Heart left ventricle (tissue), 16 donors: ENCODE measurements at regions of chr16 and their contacts with region 1.

Region 1: DNA sequence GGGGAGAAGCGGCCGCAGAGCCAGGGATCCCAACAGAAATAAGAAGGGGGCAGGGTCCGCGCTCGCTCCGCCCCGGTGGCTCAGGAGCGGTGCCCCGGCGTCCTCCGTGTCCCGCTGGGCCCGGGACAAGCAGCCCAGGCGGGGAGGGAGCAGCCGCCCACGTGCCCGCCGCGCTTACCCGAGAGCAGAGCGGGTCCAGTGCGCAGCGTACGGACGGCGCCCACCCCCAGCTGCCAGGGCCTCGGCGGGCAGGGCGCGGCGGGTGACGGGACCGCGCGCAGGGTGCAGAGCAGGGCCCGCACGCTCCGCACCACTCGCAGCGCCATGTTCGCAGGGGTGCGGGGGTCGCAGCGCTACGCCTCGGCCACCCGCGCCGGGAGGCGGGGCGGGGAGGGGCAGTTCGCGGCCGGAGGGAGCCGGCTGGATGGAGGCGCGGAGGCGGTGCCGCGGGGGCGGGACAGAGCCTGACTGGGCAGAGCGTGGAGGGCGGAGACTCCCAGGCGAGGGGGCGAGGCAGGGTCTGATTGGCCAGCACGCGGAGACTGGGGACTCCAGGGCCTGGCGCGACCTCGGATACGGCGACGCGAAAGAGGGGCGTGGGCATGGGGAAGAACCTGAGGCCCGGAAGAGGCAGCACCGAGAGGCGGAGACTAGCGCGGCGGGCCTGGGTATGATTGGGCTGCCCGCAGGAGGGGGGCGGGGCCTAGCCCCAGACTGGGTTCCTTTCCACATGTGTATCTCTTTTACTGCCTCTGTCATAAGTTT is at the start of gene GCSH:
- DNase-seq: peak; percentile 100
- ATAC-seq: peak; percentile 99 to 100 (median 100)
- H3K4me3 ChIP-seq: peak within 1 kb of the TSS; percentile 50 to 97 (median 78)
- H3K27ac ChIP-seq: peak within 1 kb of the TSS; percentile 40 to 86 (median 71)
- H3K4me1 ChIP-seq: peaks cover 0 to 14% (median 2%) of the 10 kb centered on the region in 12 donors
- H3K27me3 ChIP-seq: no peaks in the 10 kb centered on the region
- CTCF ChIP-seq: no peak
- POLR2A ChIP-seq: peak in 1 of 2 donors; percentile 48
- total RNA-seq, gene GCSH: 22.3 to 51.2 (median 40.1) TPM

Region 2: GRCh38 chr16:81053761-81054160 is 42.4 kb before region 1 on chr16:
- intact Hi-C with region 1: no loop called
- DNase-seq: no peak
- ATAC-seq: no peak
- H3K4me3 ChIP-seq: no peak overlapping the region
- H3K27ac ChIP-seq: no peak overlapping the region
- H3K4me1 ChIP-seq: no peaks in the 10 kb centered on the region
- H3K27me3 ChIP-seq: no peaks in the 10 kb centered on the region
- CTCF ChIP-seq: no peak
- POLR2A ChIP-seq: no peak

Region 3: GRCh38 chr16:81077076-81077940 is 18.8 kb before region 1 on chr16 and contains the start of gene C16orf46:
- intact Hi-C with region 1: loop called in 3 of 10 experiments (anchors 1 kb)
- DNase-seq: peak; percentile 97 to 99 (median 97)
- ATAC-seq: peak; percentile 98 to 99 (median 99)
- H3K4me3 ChIP-seq: peak within 1 kb of the TSS; percentile 63 to 90 (median 77)
- H3K27ac ChIP-seq: peak within 1 kb of the TSS; percentile 58 to 99 (median 97)
- H3K4me1 ChIP-seq: peaks cover 0 to 14% (median 6%) of the 10 kb centered on the region in 12 donors
- H3K27me3 ChIP-seq: no peaks in the 10 kb centered on the region
- CTCF ChIP-seq: no peak
- POLR2A ChIP-seq: peak; percentile 16 to 88
- total RNA-seq, gene C16orf46: 0.34 to 1.4 (median 0.63) TPM in 6 of 9 donors, not detected in the others

Region 4: DNA sequence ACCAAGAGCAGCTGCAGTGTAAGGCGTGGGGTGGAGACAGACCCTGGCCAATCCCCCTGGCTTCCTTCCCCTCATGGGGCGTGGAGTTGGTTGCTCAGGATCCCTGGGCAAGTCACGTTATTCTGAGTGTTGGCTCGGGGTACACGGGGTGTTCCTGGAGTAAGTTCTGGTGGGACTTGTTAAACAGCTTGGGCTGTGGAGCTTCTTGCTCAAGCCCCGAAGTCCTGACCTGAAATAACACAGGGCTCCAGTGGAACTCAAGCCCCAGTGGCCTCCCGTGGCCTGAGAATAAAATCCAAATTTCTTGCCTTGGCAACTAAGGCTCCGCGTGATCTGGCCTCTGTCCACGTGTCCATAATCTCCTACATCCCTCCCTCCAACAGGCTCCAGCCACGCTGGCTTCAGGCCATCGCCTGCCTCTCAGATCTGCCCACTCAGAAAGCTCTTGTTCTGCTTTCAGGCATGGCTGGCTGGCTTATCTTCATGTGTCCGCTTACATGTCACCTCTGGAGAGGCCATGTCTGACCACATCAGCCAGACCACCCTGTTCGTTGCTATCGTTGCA is 93.0 kb after region 1 on chr16:
- intact Hi-C with region 1: no loop called
- DNase-seq: peak; percentile 68 to 89 (median 79)
- ATAC-seq: peak; percentile 86 to 92 (median 88)
- H3K4me3 ChIP-seq: no peak overlapping the region
- H3K27ac ChIP-seq: peak overlapping the region in 7 of 12 donors; percentile 0 to 73 (median 33)
- H3K4me1 ChIP-seq: peaks cover 0 to 11% (median 0%) of the 10 kb centered on the region in 12 donors
- H3K27me3 ChIP-seq: no peaks in the 10 kb centered on the region
- CTCF ChIP-seq: no peak
- POLR2A ChIP-seq: no peak

Region 5: GRCh38 chr16:81314603-81315270 is 218.6 kb after region 1 on chr16 and contains the start of gene GAN:
- intact Hi-C with region 1: loop called in 1 of 10 experiments (anchors 10 kb)
- DNase-seq: peak; percentile 95 to 97 (median 96)
- ATAC-seq: peak; percentile 98 to 100 (median 99)
- H3K4me3 ChIP-seq: peak within 1 kb of the TSS; percentile 56 to 94 (median 89)
- H3K27ac ChIP-seq: peak within 1 kb of the TSS; percentile 64 to 96 (median 88)
- H3K4me1 ChIP-seq: peaks cover 0 to 38% (median 22%) of the 10 kb centered on the region in 12 donors
- H3K27me3 ChIP-seq: no peaks in the 10 kb centered on the region
- CTCF ChIP-seq: no peak
- POLR2A ChIP-seq: peak; percentile 67 to 90
- total RNA-seq, gene GAN: 8.7 to 17.7 (median 13.1) TPM